ENCODE measurements at regions of chr18 and their contacts with region 1.

Region 1: GRCh38 chr18:43271593-43272432 is 5.5 kb downstream of the SYT4 start:
- DNase-seq: peak in 1 of 10 donors; percentile 33
- H3K4me3 ChIP-seq: peak overlapping the region in 20 of 59 donors; percentile 4 to 68 (median 34)
- H3K27ac ChIP-seq: no peak overlapping the region
- H3K27me3 ChIP-seq: peaks cover 0 to 25% (median 0%) of the 10 kb centered on the region in 45 donors
- CTCF ChIP-seq: peak; percentile 74 to 95 (median 87)

Region 2: DNA sequence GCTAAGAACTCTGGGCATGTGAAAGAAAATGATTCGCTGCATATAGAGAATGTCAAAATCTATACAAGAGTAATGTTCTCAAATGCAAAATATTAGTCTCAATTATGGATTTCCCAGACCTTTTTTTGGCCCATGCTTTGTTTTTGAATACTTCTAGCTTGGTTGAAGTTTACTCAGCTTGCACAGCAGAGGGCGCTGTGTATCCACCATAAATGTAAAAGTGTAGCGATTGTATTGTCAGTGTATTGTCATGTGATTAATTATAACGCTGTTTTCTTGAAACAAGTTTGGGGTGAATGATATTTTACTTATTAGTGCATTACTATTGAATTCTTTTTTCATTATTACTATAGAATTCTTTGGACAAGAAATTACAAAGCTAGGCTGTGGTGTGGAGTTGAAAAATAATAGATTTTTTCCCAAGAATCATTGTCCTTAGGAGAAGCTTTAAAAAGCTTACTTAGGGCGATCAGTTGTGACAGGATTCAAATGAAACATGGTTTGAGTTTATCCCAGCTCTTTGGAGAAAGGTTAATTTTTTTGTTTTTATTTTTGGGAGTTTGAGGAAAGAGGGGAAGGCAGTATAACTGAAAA is 1218.5 kb before region 1 on chr18:
- intact Hi-C with region 1: loop called in 1 of 2 experiments (anchors 10 kb)
- DNase-seq: peak in 7 of 10 donors; percentile 35 to 72 (median 48)
- H3K4me3 ChIP-seq: peak overlapping the region in 23 of 59 donors; percentile 6 to 42 (median 28)
- H3K27ac ChIP-seq: peak overlapping the region in 8 of 59 donors; percentile 6 to 64 (median 28)
- H3K27me3 ChIP-seq: no peaks in the 10 kb centered on the region
- CTCF ChIP-seq: peak; percentile 79 to 99 (median 92)

Region 3: DNA sequence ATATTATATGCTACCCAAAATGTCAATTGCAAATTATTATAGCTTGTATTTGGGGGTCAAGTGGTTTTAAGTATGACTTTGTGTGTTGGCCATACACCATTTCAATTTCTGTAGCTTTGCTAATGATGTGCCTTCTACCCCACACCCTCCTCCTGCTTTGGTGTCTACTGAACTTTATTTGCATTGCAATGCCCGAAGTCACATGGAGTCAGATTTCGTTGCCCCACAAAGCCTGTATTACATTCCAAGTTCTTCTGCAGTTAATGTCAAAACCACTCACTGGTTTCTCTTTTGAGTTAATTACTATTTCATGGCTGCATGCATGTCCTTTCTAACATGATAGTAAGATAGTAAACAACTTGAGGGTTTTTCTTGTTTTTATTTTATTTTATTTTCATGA is 685.2 kb before region 1 on chr18:
- intact Hi-C with region 1: loop called in 1 of 2 experiments (anchors 5 kb)
- DNase-seq: no peak
- H3K4me3 ChIP-seq: no peak overlapping the region
- H3K27ac ChIP-seq: no peak overlapping the region
- H3K27me3 ChIP-seq: peaks cover 0 to 3% (median 0%) of the 10 kb centered on the region in 45 donors
- CTCF ChIP-seq: no peak

Region 4: GRCh38 chr18:43563780-43564179 is 292.0 kb after region 1 on chr18:
- intact Hi-C with region 1: loop called in 1 of 2 experiments (anchors 10 kb)
- DNase-seq: peak in 2 of 10 donors; percentile 31 to 52
- H3K4me3 ChIP-seq: no peak overlapping the region
- H3K27ac ChIP-seq: no peak overlapping the region
- H3K27me3 ChIP-seq: peaks cover 0 to 7% (median 0%) of the 10 kb centered on the region in 45 donors
- CTCF ChIP-seq: peak in 55 of 56 donors; percentile 18 to 78 (median 59)